BJ (cell line): ENCODE measurements at regions of chr3 and their contacts with region 1.

Region 1: DNA sequence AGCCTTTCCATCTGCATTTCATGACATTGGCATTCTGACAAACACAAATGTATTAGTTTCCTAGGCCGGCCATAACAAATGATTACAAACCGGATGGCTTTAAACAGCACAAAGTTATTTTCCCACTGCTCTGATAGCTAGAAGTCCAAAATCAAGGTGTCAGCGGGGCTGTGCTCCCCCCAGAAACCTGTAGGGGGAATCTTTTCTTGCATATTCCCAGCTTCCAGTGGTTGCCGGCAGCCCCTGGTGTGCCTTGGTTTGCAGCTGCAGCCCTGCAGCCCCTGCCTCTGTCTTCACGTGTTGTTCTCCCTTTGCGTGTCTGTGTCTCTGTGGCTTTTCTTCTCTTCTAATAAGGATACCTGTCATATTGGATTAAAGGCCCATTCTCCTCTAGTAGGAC is 79.0 kb upstream of the CDV3 start:
- DNase-seq: no peak
- H3K4me3 ChIP-seq: no peak overlapping the region
- H3K27me3 ChIP-seq: no peaks in the 10 kb centered on the region
- CTCF ChIP-seq: peak; percentile 28; the same call in 1 of the 2 replicates

Region 2: GRCh38 chr3:133441867-133442270 is 52.6 kb before region 1 on chr3:
- CTCF ChIA-PET with region 1: no interaction called
- POLR2A ChIA-PET with region 1: interaction called, 12 read pairs
- DNase-seq: no peak
- H3K4me3 ChIP-seq: no peak overlapping the region
- H3K27me3 ChIP-seq: peaks cover 2% of the 10 kb centered on the region
- CTCF ChIP-seq: no peak